ENCODE measurements at regions of chr12 and their contacts with region 1.

Region 1: DNA sequence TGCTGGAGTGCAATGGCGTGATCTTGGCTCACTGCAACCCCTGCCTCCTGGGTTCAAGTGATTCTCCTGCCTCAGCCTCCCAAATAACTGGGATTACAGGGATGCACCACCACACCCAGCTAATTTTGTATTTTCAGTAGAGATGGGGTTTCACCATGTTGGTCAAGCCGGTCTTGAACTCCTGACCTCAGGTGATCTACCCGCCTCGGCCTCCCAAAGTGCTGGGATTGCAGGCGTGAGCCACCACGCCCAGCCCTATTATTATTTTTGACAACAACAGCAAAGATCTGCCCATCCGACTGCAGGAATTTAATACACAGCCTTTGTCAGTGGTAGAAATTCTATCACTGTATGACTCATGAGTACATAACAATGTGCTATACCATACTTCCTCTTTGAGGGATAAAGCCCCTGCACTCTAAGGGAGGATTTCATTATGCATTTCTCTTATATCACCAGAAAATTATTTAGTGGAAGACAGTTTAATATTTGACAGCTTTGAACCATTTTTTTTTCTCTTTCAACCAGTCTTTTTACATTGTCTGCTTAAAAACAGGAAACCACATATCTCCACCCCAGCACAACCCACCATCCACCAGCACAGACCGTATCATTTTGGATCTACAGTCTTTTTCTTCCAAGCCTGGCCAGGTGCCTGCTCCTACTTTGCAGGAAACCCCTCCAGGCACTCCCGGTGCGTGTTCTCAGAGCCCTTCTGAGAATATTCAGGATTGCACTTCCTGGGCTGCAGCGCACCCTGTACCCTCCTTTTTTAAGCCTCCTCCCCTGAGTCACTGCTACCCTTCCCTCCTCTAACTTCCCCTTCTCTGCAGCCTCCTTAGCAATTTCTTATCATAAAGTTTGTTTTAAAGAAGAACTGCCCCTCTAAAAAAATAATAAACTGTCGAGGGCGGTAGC is 594 bp downstream of the ARHGDIB start:
- DNase-seq: peak; percentile 75 to 86 (median 82)
- H3K4me3 ChIP-seq: peak overlapping the region; percentile 82 to 100 (median 95)
- H3K4me3 Mint-ChIP-seq: peak overlapping the region; percentile 95 to 99
- H3K27ac ChIP-seq: peak overlapping the region; percentile 88 to 96
- H3K27ac Mint-ChIP-seq: peak overlapping the region; percentile 95 to 99 (median 99)
- H3K4me1 ChIP-seq: peaks cover 74 to 93% of the 10 kb centered on the region in 2 donors
- H3K4me1 Mint-ChIP-seq: peaks cover 89% of the 10 kb centered on the region
- H3K27me3 ChIP-seq: no peaks in the 10 kb centered on the region
- H3K27me3 Mint-ChIP-seq: no peaks in the 10 kb centered on the region
- CTCF ChIP-seq: no peak

Region 2: GRCh38 chr12:14367040-14367661 is 593.7 kb before region 1 on chr12:
- intact Hi-C with region 1: no loop called
- DNase-seq: peak; percentile 32 to 55 (median 46)
- H3K4me3 ChIP-seq: peak overlapping the region; percentile 58 to 86 (median 59)
- H3K4me3 Mint-ChIP-seq: peak overlapping the region; percentile 83 to 94
- H3K27ac ChIP-seq: peak overlapping the region in 1 of 2 donors; percentile 96
- H3K27ac Mint-ChIP-seq: peak overlapping the region; percentile 88 to 99 (median 96)
- H3K4me1 ChIP-seq: peaks cover 7 to 31% of the 10 kb centered on the region in 2 donors
- H3K4me1 Mint-ChIP-seq: peaks cover 25% of the 10 kb centered on the region
- H3K27me3 ChIP-seq: no peaks in the 10 kb centered on the region
- H3K27me3 Mint-ChIP-seq: peaks cover 0 to 2% (median 0%) of the 10 kb centered on the region in 3 donors
- CTCF ChIP-seq: no peak

Region 3: DNA sequence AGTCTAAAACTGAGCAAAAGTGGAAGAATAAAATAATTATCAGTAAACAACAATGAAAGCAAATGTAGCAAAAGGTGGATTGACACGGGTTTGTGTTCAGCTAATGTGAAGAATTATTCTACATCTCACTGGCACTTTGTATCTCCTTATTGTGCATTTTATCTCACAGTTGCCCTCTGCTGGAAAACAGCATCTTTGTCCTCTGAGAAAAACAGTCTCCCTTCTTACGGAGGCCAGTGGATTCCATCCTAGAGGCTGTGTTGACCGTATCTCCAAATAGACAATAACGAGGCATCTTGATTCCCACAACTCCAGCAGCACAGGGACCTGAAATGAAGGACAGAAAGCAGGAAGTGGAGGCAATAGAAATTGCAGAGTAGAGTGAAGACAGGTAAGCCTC is 341.8 kb before region 1 on chr12:
- intact Hi-C with region 1: loop called in 1 of 2 experiments (anchors 10 kb)
- DNase-seq: no peak
- H3K4me3 ChIP-seq: no peak overlapping the region
- H3K4me3 Mint-ChIP-seq: no peak overlapping the region
- H3K27ac ChIP-seq: no peak overlapping the region
- H3K27ac Mint-ChIP-seq: no peak overlapping the region
- H3K4me1 ChIP-seq: peaks cover 32 to 65% of the 10 kb centered on the region in 2 donors
- H3K4me1 Mint-ChIP-seq: peaks cover 45% of the 10 kb centered on the region
- H3K27me3 ChIP-seq: no peaks in the 10 kb centered on the region
- H3K27me3 Mint-ChIP-seq: no peaks in the 10 kb centered on the region
- CTCF ChIP-seq: peak; percentile 39

Region 4: GRCh38 chr12:14981049-14981448 is 20.2 kb after region 1 on chr12:
- intact Hi-C with region 1: loop called in 1 of 2 experiments (anchors 2 kb)
- DNase-seq: peak; percentile 92 to 99 (median 97)
- H3K4me3 ChIP-seq: peak overlapping the region; percentile 19 to 69 (median 69)
- H3K4me3 Mint-ChIP-seq: peak overlapping the region; percentile 62 to 89
- H3K27ac ChIP-seq: peak overlapping the region; percentile 91 to 98
- H3K27ac Mint-ChIP-seq: peak overlapping the region; percentile 95 to 100 (median 99)
- H3K4me1 ChIP-seq: peaks cover 74 to 78% of the 10 kb centered on the region in 2 donors
- H3K4me1 Mint-ChIP-seq: peaks cover 77% of the 10 kb centered on the region
- H3K27me3 ChIP-seq: no peaks in the 10 kb centered on the region
- H3K27me3 Mint-ChIP-seq: no peaks in the 10 kb centered on the region
- CTCF ChIP-seq: no peak

Region 5: GRCh38 chr12:14995583-14996425 is 35.0 kb after region 1 on chr12:
- intact Hi-C with region 1: loop called in 1 of 2 experiments (anchors 5 kb)
- DNase-seq: peak; percentile 36 to 68 (median 63)
- H3K4me3 ChIP-seq: no peak overlapping the region
- H3K4me3 Mint-ChIP-seq: no peak overlapping the region
- H3K27ac ChIP-seq: peak overlapping the region in 1 of 2 donors; percentile 4
- H3K27ac Mint-ChIP-seq: peak overlapping the region in 3 of 7 donors; percentile 33 to 70 (median 38)
- H3K4me1 ChIP-seq: peaks cover 6 to 21% of the 10 kb centered on the region in 2 donors
- H3K4me1 Mint-ChIP-seq: peaks cover 27% of the 10 kb centered on the region
- H3K27me3 ChIP-seq: no peaks in the 10 kb centered on the region
- H3K27me3 Mint-ChIP-seq: peaks cover 1 to 4% (median 3%) of the 10 kb centered on the region in 3 donors
- CTCF ChIP-seq: peak; percentile 80

Measured in CD14-positive monocyte (primary cell).